ENCODE measurements at regions of chr2 and their contacts with region 1.

Region 1: DNA sequence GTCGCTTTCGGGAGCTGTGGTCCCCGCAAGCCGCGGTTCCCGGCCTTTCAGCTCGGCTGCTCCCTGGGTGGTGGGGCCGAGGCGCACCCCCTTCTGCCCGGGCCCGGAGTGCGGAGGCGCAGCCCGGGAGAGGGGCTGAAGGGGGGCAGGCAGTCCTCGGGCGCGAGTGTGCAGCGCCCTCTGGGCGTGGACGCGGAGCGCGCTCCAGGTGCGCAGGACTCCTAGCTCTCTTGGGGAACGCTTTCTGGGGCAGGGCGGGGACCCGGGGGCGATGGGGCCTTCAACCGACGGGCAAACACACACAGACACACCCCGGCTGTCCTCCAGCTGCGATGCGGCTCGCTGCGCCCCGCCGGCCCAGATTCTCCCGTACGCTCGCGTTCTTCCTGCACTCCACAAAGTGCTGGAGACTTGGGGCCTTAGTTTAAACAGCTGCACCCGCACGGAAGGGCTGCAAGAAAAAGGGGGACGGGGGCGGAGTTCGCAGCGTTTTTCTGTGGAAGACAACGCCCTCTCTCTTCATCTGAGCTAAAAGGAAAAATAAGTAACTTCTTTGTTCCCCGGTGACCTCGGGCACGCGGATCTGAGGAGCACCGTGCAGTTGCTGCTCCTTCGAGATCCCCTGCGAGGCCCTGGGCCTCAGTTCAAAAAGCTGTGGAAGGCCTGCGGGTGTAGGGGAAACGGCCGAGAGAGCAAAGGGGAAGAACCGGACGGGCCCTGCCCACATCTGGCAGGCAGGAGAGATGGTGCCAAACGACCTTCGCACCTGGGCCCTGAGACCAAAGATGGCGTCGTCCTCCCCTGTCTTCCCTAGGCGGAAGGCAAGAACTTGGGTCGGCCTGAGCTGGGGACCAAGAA is 593 bp upstream of the SDC1 start:
- DNase-seq: no peak
- H3K4me3 ChIP-seq: peak overlapping the region; percentile 68 to 77
- H3K27ac ChIP-seq: peak overlapping the region in 1 of 2 experiments; percentile 99; a peak in 2 of 4 replicates
- H3K4me1 ChIP-seq: peaks cover 26 to 30% of the 10 kb centered on the region in 2 experiments
- H3K27me3 ChIP-seq: no peaks in the 10 kb centered on the region
- CTCF ChIP-seq: peak; percentile 72
- EP300 ChIP-seq: no peak
- RAD21 ChIP-seq: peak; percentile 81

Region 2: GRCh38 chr2:20169741-20170414 is 55.6 kb before region 1 on chr2:
- CTCF ChIA-PET with region 1: interaction called, 7 read pairs
- POLR2A ChIA-PET with region 1: interaction called, 11 read pairs
- DNase-seq: no peak
- H3K4me3 ChIP-seq: no peak overlapping the region
- H3K27ac ChIP-seq: no peak overlapping the region
- H3K4me1 ChIP-seq: peaks cover 6 to 72% of the 10 kb centered on the region in 2 experiments; a peak in 2 of 4 replicates
- H3K27me3 ChIP-seq: no peaks in the 10 kb centered on the region
- CTCF ChIP-seq: no peak
- EP300 ChIP-seq: no peak
- RAD21 ChIP-seq: no peak

Region 3: GRCh38 chr2:20242060-20243006 is 16.8 kb after region 1 on chr2:
- CTCF ChIA-PET with region 1: interaction called, 19 read pairs
- POLR2A ChIA-PET with region 1: interaction called, 4 read pairs
- DNase-seq: peak; percentile 72
- H3K4me3 ChIP-seq: no peak overlapping the region
- H3K27ac ChIP-seq: no peak overlapping the region
- H3K4me1 ChIP-seq: no peaks in the 10 kb centered on the region
- H3K27me3 ChIP-seq: no peaks in the 10 kb centered on the region
- CTCF ChIP-seq: peak; percentile 34; the same call in 1 of the 2 replicates
- EP300 ChIP-seq: no peak
- RAD21 ChIP-seq: no peak

Region 4: GRCh38 chr2:20282916-20283592 is 57.5 kb after region 1 on chr2:
- CTCF ChIA-PET with region 1: interaction called, 23 read pairs
- POLR2A ChIA-PET with region 1: interaction called, 5 read pairs
- DNase-seq: peak; percentile 69
- H3K4me3 ChIP-seq: no peak overlapping the region
- H3K27ac ChIP-seq: peak overlapping the region; percentile 1 to 98; a peak in 2 of 4 replicates
- H3K4me1 ChIP-seq: peaks cover 0 to 50% of the 10 kb centered on the region in 2 experiments; a peak in 2 of 4 replicates
- H3K27me3 ChIP-seq: no peaks in the 10 kb centered on the region
- CTCF ChIP-seq: no peak
- EP300 ChIP-seq: peak in 1 of 2 experiments; percentile 79; a peak in 2 of 4 replicates
- RAD21 ChIP-seq: peak; percentile 34

Region 5: GRCh38 chr2:20326163-20326780 is 100.7 kb after region 1 on chr2:
- CTCF ChIA-PET with region 1: interaction called, 34 read pairs
- POLR2A ChIA-PET with region 1: interaction called, 3 read pairs
- DNase-seq: peak; percentile 74
- H3K4me3 ChIP-seq: no peak overlapping the region
- H3K27ac ChIP-seq: peak overlapping the region; percentile 18 to 33; a peak in 2 of 4 replicates
- H3K4me1 ChIP-seq: peaks cover 0 to 7% of the 10 kb centered on the region in 2 experiments; a peak in 2 of 4 replicates
- H3K27me3 ChIP-seq: no peaks in the 10 kb centered on the region
- CTCF ChIP-seq: peak; percentile 99
- EP300 ChIP-seq: no peak
- RAD21 ChIP-seq: peak; percentile 81

Region 6: GRCh38 chr2:20384953-20385352 is 159.4 kb after region 1 on chr2:
- CTCF ChIA-PET with region 1: no interaction called
- POLR2A ChIA-PET with region 1: no interaction called
- DNase-seq: no peak
- H3K4me3 ChIP-seq: no peak overlapping the region
- H3K27ac ChIP-seq: no peak overlapping the region
- H3K4me1 ChIP-seq: peaks cover 0 to 10% of the 10 kb centered on the region in 2 experiments; a peak in 1 of 4 replicates
- H3K27me3 ChIP-seq: peaks cover 9% of the 10 kb centered on the region; the same call in 1 of the 2 replicates
- CTCF ChIP-seq: no peak
- EP300 ChIP-seq: no peak
- RAD21 ChIP-seq: no peak

Measured in SK-N-SH (cell line).